Breast epithelium (tissue), 4 donors: ENCODE measurements at regions of chr4 and their contacts with region 1.

Region 1: GRCh38 chr4:139761461-139761860 is 95.8 kb downstream of the MGST2 start:
- DNase-seq: no peak
- H3K4me3 ChIP-seq: no peak overlapping the region
- H3K27ac ChIP-seq: no peak overlapping the region
- H3K4me1 ChIP-seq: no peaks in the 10 kb centered on the region
- H3K27me3 ChIP-seq: no peaks in the 10 kb centered on the region
- CTCF ChIP-seq: no peak
- POLR2A ChIP-seq: no peak

Region 2: DNA sequence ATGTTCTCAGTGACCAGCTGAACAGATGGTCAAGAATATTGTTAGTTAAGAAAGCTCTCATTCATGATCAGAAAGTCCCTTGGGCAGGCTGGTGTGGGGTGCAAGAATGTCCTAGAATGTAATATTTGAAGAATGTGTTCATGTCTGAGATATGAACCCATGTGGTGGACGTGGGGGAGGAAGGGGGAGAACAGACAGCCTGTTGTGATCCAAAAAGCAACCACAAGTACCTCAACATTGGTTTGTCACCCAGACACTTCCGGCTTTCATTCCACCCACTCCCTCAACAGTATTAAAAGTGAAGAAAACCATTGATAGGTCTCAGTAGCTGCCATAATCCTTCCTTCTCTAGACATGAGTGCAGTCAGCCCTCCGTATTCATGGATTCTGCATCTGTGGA is 310.3 kb after region 1 on chr4:
- intact Hi-C with region 1: no loop called
- DNase-seq: peak in 1 of 2 donors; percentile 62
- H3K4me3 ChIP-seq: peak overlapping the region in 1 of 3 donors; percentile 26
- H3K27ac ChIP-seq: peak overlapping the region; percentile 10
- H3K4me1 ChIP-seq: peaks cover 0 to 8% of the 10 kb centered on the region in 2 donors
- H3K27me3 ChIP-seq: no peaks in the 10 kb centered on the region
- CTCF ChIP-seq: no peak
- POLR2A ChIP-seq: no peak

Region 3: DNA sequence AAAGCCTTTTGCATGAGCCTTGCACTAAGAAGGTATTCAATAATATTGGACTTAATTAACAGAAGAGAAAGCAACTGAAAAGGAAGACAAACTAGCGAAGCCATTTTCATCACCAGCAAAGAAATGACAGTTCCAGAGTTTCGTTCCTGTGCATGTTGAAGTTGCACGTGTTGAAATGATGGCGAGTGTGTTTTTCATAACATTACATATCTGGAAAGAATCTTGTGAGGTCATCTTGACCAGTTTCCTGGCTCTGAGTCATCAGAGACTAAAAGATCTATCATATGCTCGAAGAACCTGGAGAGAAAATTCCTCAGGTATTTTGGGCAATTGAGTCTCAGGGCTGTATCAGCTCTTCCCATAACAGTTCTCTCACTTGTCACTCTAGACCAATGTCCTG is 498.8 kb after region 1 on chr4:
- intact Hi-C with region 1: loop called (anchors 10 kb)
- DNase-seq: no peak
- H3K4me3 ChIP-seq: no peak overlapping the region
- H3K27ac ChIP-seq: no peak overlapping the region
- H3K4me1 ChIP-seq: no peaks in the 10 kb centered on the region
- H3K27me3 ChIP-seq: no peaks in the 10 kb centered on the region
- CTCF ChIP-seq: no peak
- POLR2A ChIP-seq: no peak